ENCODE measurements at regions of chr12 and their contacts with region 1.

Region 1: GRCh38 chr12:108193917-108194316 is 64.8 kb downstream of the WSCD2 start:
- DNase-seq: no peak
- H3K4me3 ChIP-seq: no peak overlapping the region
- H3K27ac ChIP-seq: no peak overlapping the region
- H3K4me1 ChIP-seq: peaks cover 0 to 5% (median 0%) of the 10 kb centered on the region in 4 donors
- H3K27me3 ChIP-seq: no peaks in the 10 kb centered on the region
- CTCF ChIP-seq: peak; percentile 53 to 72 (median 63)
- EP300 ChIP-seq: no peak
- POLR2A ChIP-seq: no peak

Region 2: DNA sequence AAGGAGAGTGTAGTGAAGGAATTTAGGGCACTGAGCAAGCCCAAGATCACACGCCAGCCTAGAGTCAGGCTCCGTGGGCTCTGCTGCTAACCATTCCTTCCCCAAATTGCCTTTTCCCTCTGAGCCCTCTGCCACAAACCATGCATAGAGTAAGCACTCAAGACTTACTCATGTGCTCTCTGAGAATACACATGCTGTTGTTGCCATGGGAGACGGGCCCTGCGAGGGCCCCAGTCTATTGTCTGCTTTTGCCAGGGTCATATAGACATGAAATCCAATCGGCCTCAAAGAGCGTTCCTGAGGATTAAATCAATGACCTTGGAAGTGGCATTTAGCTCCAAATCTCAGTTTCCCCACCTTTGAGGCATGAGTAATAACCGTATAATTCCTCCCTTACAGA is 113.6 kb before region 1 on chr12:
- in situ Hi-C with region 1: no loop called
- intact Hi-C with region 1: no loop called
- DNase-seq: no peak
- H3K4me3 ChIP-seq: no peak overlapping the region
- H3K27ac ChIP-seq: no peak overlapping the region
- H3K4me1 ChIP-seq: no peaks in the 10 kb centered on the region
- H3K27me3 ChIP-seq: no peaks in the 10 kb centered on the region
- CTCF ChIP-seq: no peak
- EP300 ChIP-seq: no peak
- POLR2A ChIP-seq: no peak

Region 3: GRCh38 chr12:108099073-108099472 is 94.8 kb before region 1 on chr12:
- in situ Hi-C with region 1: no loop called
- intact Hi-C with region 1: loop called (anchors 10 kb)
- DNase-seq: no peak
- H3K4me3 ChIP-seq: no peak overlapping the region
- H3K27ac ChIP-seq: no peak overlapping the region
- H3K4me1 ChIP-seq: no peaks in the 10 kb centered on the region
- H3K27me3 ChIP-seq: no peaks in the 10 kb centered on the region
- CTCF ChIP-seq: peak in 4 of 5 experiments; percentile 10 to 34 (median 28)
- EP300 ChIP-seq: no peak
- POLR2A ChIP-seq: no peak

Region 4: GRCh38 chr12:108129017-108129812 is 64.7 kb before region 1 on chr12 and contains the start of gene WSCD2:
- in situ Hi-C with region 1: no loop called
- intact Hi-C with region 1: no loop called
- DNase-seq: peak; percentile 21
- H3K4me3 ChIP-seq: peak within 1 kb of the TSS; percentile 32 to 47 (median 38)
- H3K27ac ChIP-seq: peak within 1 kb of the TSS; percentile 39 to 82 (median 72)
- H3K4me1 ChIP-seq: peaks cover 0 to 14% (median 9%) of the 10 kb centered on the region in 4 donors
- H3K27me3 ChIP-seq: peaks cover 39% of the 10 kb centered on the region
- CTCF ChIP-seq: peak in 3 of 5 experiments; percentile 9 to 16 (median 16)
- EP300 ChIP-seq: no peak
- POLR2A ChIP-seq: no peak
- total RNA-seq, gene WSCD2: 0.16 to 46.6 (median 1.1) TPM in 3 of 4 donors, not detected in the other